Activated CD8-positive, alpha-beta T cell treated with anti-CD3 and anti-CD28 coated beads for 36 hours (primary cell): ENCODE measurements at regions of chr6 and their contacts with region 1.

Region 1: DNA sequence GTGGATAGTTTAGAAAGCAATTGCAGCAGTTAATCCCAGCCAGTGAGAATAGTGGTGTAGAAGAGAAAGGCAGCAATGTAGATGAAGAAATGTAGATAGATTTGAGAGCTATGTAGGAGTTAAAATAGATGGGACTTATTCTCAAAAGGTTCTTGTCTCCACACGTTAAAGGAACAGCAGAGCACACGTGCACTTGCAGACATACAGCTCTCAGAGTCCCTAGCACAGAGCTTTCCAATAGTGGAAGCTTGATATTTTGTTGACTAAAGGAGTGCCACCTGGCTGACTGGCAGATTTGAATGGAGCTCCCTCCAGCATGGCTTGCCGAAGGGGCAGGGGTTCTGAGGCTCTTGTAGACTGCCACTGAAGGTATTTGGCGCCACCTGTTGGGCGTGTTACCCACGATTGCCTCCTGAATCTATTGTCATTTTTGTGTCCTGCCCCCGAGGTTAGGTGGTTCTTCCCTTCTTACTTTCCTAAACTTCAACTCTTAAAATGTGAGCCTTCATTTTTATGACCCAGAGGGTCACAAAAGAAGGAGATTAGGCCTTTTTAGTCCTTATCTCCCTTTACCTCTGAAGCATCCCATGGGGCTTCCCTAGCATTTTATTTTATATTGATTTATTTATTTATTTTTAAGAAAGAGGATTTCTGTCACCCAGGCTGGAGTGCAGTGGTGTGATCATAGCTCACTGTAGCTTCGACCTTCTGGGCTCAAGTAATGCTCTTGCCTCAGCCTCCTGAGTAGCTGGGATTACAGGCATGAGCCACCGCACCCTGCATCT is 16.4 kb downstream of the BRD2 start:
- DNase-seq: peak; percentile 98
- ATAC-seq: peak; percentile 84
- H3K4me3 Mint-ChIP-seq: no peak overlapping the region
- H3K27ac Mint-ChIP-seq: peak overlapping the region; percentile 68
- H3K4me1 Mint-ChIP-seq: peaks cover 18% of the 10 kb centered on the region
- H3K27me3 Mint-ChIP-seq: no peaks in the 10 kb centered on the region
- CTCF ChIP-seq: peak; percentile 92

Region 2: GRCh38 chr6:32843979-32844838 is 140.6 kb before region 1 on chr6 and contains the start of gene PSMB8:
- CTCF ChIA-PET with region 1: interaction called, 40 read pairs
- POLR2A ChIA-PET with region 1: interaction called, 20 read pairs
- intact Hi-C with region 1: no loop called
- DNase-seq: peak; percentile 100
- ATAC-seq: peak; percentile 75
- H3K4me3 Mint-ChIP-seq: peak within 1 kb of the TSS; percentile 97
- H3K27ac Mint-ChIP-seq: peak within 1 kb of the TSS; percentile 99
- H3K4me1 Mint-ChIP-seq: peaks cover 63% of the 10 kb centered on the region
- H3K27me3 Mint-ChIP-seq: no peaks in the 10 kb centered on the region
- CTCF ChIP-seq: no peak
- total RNA-seq, gene PSMB8: 370 to 371 TPM

Region 3: DNA sequence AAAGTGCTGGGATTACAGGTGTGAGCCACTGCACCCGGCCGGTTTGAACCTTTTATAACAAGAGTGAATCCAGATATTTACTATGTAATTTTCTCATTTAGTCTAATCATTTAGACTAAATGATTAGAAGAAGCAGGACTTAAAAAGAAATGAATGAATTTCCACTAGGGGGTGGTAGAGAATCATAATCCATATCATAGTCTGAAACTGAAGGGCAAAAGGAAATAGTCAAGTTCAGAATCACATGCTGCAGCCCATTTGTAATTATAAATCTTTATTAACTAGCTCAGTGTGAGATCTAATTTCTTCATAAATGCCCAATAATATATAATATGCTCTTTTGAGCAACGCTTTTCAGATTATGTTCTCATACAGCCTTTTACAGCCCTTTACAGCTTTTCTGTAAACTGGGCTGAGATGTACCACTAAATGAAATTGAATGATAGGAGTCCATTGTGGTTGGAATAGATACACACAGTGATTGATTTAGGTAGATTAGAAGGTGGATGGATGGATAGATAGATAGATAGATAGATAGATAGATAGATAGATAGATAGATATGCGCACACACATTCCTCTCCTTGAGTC is 99.0 kb before region 1 on chr6:
- CTCF ChIA-PET with region 1: interaction called, 82 read pairs
- POLR2A ChIA-PET with region 1: interaction called, 5 read pairs
- intact Hi-C with region 1: loop called (anchors 2 kb)
- DNase-seq: no peak
- ATAC-seq: peak; percentile 70
- H3K4me3 Mint-ChIP-seq: no peak overlapping the region
- H3K27ac Mint-ChIP-seq: no peak overlapping the region
- H3K4me1 Mint-ChIP-seq: peaks cover 6% of the 10 kb centered on the region
- H3K27me3 Mint-ChIP-seq: no peaks in the 10 kb centered on the region
- CTCF ChIP-seq: peak; percentile 74

Region 4: GRCh38 chr6:32920715-32921114 is 64.1 kb before region 1 on chr6:
- CTCF ChIA-PET with region 1: interaction called, 14 read pairs
- POLR2A ChIA-PET with region 1: interaction called, 6 read pairs
- intact Hi-C with region 1: no loop called
- DNase-seq: no peak
- ATAC-seq: no peak
- H3K4me3 Mint-ChIP-seq: no peak overlapping the region
- H3K27ac Mint-ChIP-seq: no peak overlapping the region
- H3K4me1 Mint-ChIP-seq: no peaks in the 10 kb centered on the region
- H3K27me3 Mint-ChIP-seq: no peaks in the 10 kb centered on the region
- CTCF ChIP-seq: no peak

Region 5: DNA sequence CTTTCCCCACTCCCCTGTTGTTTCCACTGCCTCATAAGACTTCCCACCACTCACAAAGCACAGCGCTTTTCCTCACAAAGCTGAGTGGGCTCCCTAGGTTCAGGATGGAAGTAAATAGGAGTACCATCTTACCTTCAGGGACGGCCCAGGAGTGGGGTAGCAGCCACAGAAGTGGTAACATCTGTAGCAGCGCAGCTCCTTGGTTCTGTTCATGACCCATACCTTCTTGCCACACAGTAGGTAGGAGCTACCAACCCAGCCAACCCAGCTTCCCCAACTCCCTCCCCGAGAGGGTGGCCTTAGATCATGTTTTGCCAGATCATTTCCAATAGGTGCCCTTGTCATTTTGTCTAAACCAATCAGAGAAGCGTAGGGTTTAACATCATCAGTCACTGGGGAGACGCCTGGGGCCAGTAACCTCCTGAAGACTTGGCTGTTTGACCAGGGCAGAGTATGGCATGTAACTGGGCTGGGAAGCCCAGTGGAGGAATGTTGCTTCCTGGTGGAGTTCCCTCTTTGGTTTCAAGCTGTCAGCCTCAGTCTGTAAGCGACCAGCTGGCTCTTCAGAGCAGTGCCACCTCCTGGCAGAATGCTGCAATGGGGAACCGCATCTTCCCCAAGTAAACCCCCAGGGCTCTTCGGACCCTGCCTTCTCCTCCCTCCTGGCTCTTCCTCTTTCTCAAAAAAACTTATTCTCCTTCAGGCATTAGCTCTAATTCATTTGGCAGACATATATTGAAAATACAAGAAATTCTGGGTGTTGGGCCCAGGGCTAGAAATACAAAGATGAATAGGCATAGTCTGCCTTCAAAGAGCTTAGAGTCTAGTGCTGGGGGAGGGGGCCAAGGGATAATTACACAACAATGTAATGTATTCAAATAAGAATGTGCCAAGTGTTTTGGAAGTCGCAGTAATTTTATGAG is 31.7 kb before region 1 on chr6 and contains the start of gene HLA-DMA:
- CTCF ChIA-PET with region 1: interaction called, 246 read pairs
- POLR2A ChIA-PET with region 1: interaction called, 852 read pairs
- intact Hi-C with region 1: no loop called
- DNase-seq: peak; percentile 83
- ATAC-seq: peak; percentile 96
- H3K4me3 Mint-ChIP-seq: peak within 1 kb of the TSS; percentile 76
- H3K27ac Mint-ChIP-seq: peak within 1 kb of the TSS; percentile 77
- H3K4me1 Mint-ChIP-seq: peaks cover 65% of the 10 kb centered on the region
- H3K27me3 Mint-ChIP-seq: no peaks in the 10 kb centered on the region
- CTCF ChIP-seq: peak; percentile 98
- total RNA-seq, gene HLA-DMA: 16.2 TPM

Region 6: GRCh38 chr6:33014841-33015634 is 30.2 kb after region 1 on chr6:
- CTCF ChIA-PET with region 1: interaction called, 13 read pairs
- POLR2A ChIA-PET with region 1: interaction called, 3 read pairs
- intact Hi-C with region 1: no loop called
- DNase-seq: peak; percentile 62
- ATAC-seq: peak; percentile 83
- H3K4me3 Mint-ChIP-seq: no peak overlapping the region
- H3K27ac Mint-ChIP-seq: no peak overlapping the region
- H3K4me1 Mint-ChIP-seq: peaks cover 21% of the 10 kb centered on the region
- H3K27me3 Mint-ChIP-seq: no peaks in the 10 kb centered on the region
- CTCF ChIP-seq: peak; percentile 80